K562 (cell line): ENCODE measurements at regions of chr1 and their contacts with region 1.

Region 1: DNA sequence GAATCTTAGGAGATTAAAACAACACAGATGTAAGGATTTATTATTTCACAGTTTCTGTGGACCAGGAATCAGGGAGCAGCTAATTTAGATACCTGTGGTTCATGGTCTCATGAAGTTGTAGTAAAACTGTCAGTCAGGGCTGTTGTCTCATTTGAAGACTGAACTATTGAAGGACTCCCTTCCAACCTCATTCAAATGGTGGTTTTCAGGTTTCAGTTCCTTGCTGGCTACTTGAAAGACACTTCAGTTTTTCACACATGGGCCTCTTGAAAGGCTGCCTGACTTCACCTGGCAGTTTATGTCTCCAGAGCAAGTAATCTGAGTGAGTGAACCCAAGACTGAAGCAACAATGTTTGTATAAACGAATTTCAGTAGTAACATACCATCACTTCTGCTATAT is 915.9 kb downstream of the PLA2G4A start:
- DNase-seq: no peak
- ATAC-seq: no peak
- H3K4me3 ChIP-seq: no peak overlapping the region
- H3K27ac ChIP-seq: no peak overlapping the region
- H3K4me1 ChIP-seq: no peaks in the 10 kb centered on the region
- H3K27me3 ChIP-seq: no peaks in the 10 kb centered on the region
- CTCF ChIP-seq: no peak
- EP300 ChIP-seq: no peak
- POLR2A ChIP-seq: no peak
- RAD21 ChIP-seq: no peak

Region 2: GRCh38 chr1:187433598-187433997 is 311.1 kb before region 1 on chr1:
- CTCF ChIA-PET with region 1: no interaction called
- POLR2A ChIA-PET with region 1: no interaction called
- in situ Hi-C with region 1: no loop called
- intact Hi-C with region 1: no loop called
- DNase-seq: no peak
- ATAC-seq: no peak
- H3K4me3 ChIP-seq: no peak overlapping the region
- H3K27ac ChIP-seq: no peak overlapping the region
- H3K4me1 ChIP-seq: no peaks in the 10 kb centered on the region
- H3K27me3 ChIP-seq: no peaks in the 10 kb centered on the region
- CTCF ChIP-seq: no peak
- EP300 ChIP-seq: no peak
- POLR2A ChIP-seq: no peak
- RAD21 ChIP-seq: no peak

Region 3: GRCh38 chr1:187755536-187755935 is 10.9 kb after region 1 on chr1:
- CTCF ChIA-PET with region 1: no interaction called
- POLR2A ChIA-PET with region 1: no interaction called
- in situ Hi-C with region 1: no loop called
- intact Hi-C with region 1: loop called (anchors 1 kb)
- DNase-seq: no peak
- ATAC-seq: no peak
- H3K4me3 ChIP-seq: no peak overlapping the region
- H3K27ac ChIP-seq: no peak overlapping the region
- H3K4me1 ChIP-seq: no peaks in the 10 kb centered on the region
- H3K27me3 ChIP-seq: no peaks in the 10 kb centered on the region
- CTCF ChIP-seq: no peak
- EP300 ChIP-seq: no peak
- POLR2A ChIP-seq: no peak
- RAD21 ChIP-seq: no peak

Region 4: DNA sequence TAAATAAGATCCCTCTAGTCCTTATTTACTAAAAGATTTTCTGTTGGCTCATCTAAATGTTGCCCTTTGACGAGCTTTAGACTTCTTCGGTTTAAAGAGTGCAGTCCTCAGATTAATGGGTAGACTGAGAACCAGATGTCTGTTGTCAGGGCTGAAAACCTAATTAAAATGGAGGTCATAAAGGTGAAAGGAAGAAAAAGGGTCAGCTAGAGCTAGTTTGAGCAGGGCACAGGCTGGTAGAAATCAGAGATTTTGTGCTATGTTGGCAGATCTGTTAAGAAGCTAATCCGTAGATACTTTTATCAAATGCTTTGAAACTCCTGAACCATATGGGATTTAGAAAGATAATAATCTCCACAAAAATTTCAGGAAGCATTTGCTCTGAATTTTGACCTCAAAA is 43.1 kb after region 1 on chr1:
- CTCF ChIA-PET with region 1: no interaction called
- POLR2A ChIA-PET with region 1: no interaction called
- in situ Hi-C with region 1: no loop called
- intact Hi-C with region 1: no loop called
- DNase-seq: no peak
- ATAC-seq: no peak
- H3K4me3 ChIP-seq: no peak overlapping the region
- H3K27ac ChIP-seq: no peak overlapping the region
- H3K4me1 ChIP-seq: no peaks in the 10 kb centered on the region
- H3K27me3 ChIP-seq: no peaks in the 10 kb centered on the region
- CTCF ChIP-seq: no peak
- EP300 ChIP-seq: no peak
- POLR2A ChIP-seq: no peak
- RAD21 ChIP-seq: no peak